Activated CD8-positive, alpha-beta T cell treated with anti-CD3 and anti-CD28 coated beads for 36 hours (primary cell): ENCODE measurements at regions of chr1 and their contacts with region 1.

Region 1: GRCh38 chr1:204989266-204990058 is 53.5 kb upstream of the CNTN2 start:
- DNase-seq: peak; percentile 74
- ATAC-seq: peak; percentile 98
- H3K4me3 Mint-ChIP-seq: no peak overlapping the region
- H3K27ac Mint-ChIP-seq: no peak overlapping the region
- H3K4me1 Mint-ChIP-seq: peaks cover 12% of the 10 kb centered on the region
- H3K27me3 Mint-ChIP-seq: no peaks in the 10 kb centered on the region
- CTCF ChIP-seq: peak; percentile 89

Region 2: DNA sequence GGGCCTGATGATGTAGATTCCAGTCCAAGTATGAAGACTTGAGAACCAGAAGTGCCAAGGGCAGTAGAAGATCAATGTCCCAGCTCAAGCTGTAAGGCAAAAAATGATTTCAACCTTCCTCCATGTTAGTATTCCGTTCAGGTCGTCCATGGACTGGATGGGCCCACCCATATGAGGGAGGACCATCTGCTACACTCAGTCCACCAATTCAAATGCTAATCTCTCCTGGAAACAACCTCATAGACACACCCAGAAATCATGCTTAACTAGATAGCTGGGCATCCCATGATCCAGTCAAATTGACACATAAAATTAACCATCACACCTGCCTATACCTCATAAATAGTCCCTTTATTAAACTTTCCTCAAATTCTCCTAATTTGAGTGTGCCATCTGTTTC is 192.1 kb before region 1 on chr1:
- CTCF ChIA-PET with region 1: no interaction called
- POLR2A ChIA-PET with region 1: no interaction called
- intact Hi-C with region 1: no loop called
- DNase-seq: no peak
- ATAC-seq: no peak
- H3K4me3 Mint-ChIP-seq: no peak overlapping the region
- H3K27ac Mint-ChIP-seq: no peak overlapping the region
- H3K4me1 Mint-ChIP-seq: no peaks in the 10 kb centered on the region
- H3K27me3 Mint-ChIP-seq: no peaks in the 10 kb centered on the region
- CTCF ChIP-seq: no peak

Region 3: GRCh38 chr1:204924013-204924967 is 65.2 kb before region 1 on chr1:
- CTCF ChIA-PET with region 1: no interaction called
- POLR2A ChIA-PET with region 1: no interaction called
- intact Hi-C with region 1: no loop called
- DNase-seq: no peak
- ATAC-seq: no peak
- H3K4me3 Mint-ChIP-seq: no peak overlapping the region
- H3K27ac Mint-ChIP-seq: no peak overlapping the region
- H3K4me1 Mint-ChIP-seq: no peaks in the 10 kb centered on the region
- H3K27me3 Mint-ChIP-seq: no peaks in the 10 kb centered on the region
- CTCF ChIP-seq: no peak

Region 4: GRCh38 chr1:204975570-204976235 is 13.8 kb before region 1 on chr1:
- CTCF ChIA-PET with region 1: interaction called, 19 read pairs
- POLR2A ChIA-PET with region 1: no interaction called
- intact Hi-C with region 1: no loop called
- DNase-seq: peak; percentile 67
- ATAC-seq: peak; percentile 88
- H3K4me3 Mint-ChIP-seq: no peak overlapping the region
- H3K27ac Mint-ChIP-seq: no peak overlapping the region
- H3K4me1 Mint-ChIP-seq: peaks cover 1% of the 10 kb centered on the region
- H3K27me3 Mint-ChIP-seq: peaks cover 10% of the 10 kb centered on the region
- CTCF ChIP-seq: peak; percentile 83